Posterior cingulate gyrus (tissue), 11 donors: ENCODE measurements at regions of chr20 and their contacts with region 1.

Region 1: DNA sequence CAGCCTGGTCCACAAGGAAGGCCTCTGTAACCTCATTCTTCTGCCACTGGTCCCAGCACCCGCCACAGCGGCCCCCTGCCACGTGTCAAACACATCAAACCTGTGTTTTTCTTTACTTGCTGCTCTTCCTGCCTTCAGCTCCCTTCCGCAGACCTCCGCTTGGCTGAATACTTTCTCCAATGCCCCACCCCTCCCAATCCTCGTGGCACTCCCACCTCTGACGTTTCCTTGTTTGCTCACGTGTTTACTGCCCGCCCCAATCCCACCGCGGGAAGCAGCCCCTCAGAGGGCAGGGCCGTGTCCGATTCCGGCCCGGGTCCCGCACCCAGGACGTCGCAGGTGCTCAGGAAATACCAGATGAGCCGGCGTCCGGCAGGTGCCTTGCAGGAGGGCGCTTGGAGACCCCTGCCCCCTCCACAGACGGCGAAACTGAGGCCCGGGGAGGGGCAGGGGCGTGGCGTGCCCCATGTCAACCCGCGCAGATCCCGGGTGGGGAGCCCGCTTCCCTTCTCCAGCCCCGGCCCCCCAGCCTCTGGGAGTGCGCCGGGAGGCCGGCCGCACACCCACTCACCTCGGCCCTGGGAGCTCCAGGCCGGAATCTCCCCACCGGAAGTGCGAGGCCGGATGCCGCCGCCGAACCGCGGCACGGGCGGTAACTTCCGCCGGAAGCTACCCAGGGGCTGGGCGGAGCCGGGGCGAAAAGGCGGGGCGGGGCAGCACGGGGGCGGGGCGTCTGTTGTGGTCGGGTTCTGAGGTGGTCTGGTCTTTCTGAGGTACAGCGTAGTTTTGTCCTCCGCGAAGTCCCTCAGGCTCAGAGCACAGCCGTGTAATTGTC is 42.4 kb downstream of the ELMO2 start:
- DNase-seq: peak; percentile 80 to 98 (median 90)

Region 2: DNA sequence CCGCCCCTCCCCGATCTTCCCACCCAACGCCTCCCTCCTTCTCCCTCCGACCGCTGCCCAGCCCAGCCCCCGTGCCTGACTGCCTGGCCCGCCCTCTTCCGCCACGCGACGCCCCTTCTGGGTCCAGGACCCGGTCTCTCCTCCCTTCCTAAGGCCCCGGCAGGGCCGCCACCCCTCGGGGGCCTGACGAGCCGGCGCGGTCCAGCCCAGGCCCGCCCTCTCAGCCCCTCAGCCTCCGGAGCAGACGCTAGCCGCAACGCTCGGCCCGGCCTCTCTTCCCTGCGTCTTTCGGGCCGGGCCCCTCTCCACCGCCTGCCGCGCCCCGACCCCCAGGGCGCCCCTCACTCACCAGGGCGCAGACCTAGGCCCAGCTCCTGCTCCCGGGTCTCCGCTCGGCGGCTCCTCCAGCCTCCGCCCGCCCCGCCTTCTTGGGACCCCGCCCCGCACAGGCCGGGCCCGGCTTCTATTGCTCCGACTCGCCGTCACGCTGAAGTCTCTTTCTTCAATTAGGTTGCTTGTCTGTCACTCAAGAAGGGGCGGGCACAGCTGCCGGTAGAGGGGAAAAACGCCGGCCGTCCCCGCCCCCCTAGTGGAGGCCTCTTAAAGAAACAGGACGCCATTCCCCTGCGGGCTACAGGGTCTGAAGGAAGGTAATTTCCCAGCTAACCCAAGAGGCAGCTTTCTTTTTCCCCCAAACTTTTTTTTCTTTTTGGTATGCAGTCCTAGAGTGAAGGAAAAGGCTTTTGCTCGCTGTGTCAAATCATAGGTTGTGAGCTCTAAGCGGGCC is 42.4 kb after region 1 on chr20 and contains the start of gene ELMO2:
- intact Hi-C with region 1: loop called (anchors 2 kb)
- DNase-seq: peak; percentile 94 to 100 (median 97)

Region 3: DNA sequence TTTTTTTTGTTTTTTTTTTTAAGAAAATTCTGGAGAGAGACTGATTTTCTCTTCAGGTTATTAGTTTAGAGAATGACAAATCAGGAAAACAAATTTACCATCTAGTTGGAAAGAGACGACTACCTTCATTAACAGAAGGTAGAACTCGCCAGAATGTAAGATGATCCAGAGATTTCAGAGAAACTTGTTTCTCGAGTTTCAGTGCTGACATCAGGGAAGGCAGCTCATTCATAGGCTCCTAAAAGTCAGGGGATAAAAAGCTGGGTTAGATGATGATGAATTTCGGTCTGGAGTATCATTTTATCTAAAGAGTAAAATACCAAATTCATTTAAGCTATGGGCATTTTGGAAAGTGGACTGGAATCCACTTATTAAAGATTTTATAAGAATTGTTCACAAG is 121.4 kb after region 1 on chr20:
- intact Hi-C with region 1: no loop called
- DNase-seq: no peak